ENCODE measurements at regions of chr2 and their contacts with region 1.

Region 1: GRCh38 chr2:96336104-96336775 is 674 bp downstream of the NCAPH start:
- DNase-seq: no peak
- H3K4me3 ChIP-seq: peak overlapping the region; percentile 75 to 90 (median 90)
- H3K27ac ChIP-seq: peak overlapping the region; percentile 50
- H3K4me1 ChIP-seq: peaks cover 15% of the 10 kb centered on the region
- H3K27me3 ChIP-seq: no peaks in the 10 kb centered on the region
- CTCF ChIP-seq: no peak
- POLR2A ChIP-seq: peak; percentile 63

Region 2: DNA sequence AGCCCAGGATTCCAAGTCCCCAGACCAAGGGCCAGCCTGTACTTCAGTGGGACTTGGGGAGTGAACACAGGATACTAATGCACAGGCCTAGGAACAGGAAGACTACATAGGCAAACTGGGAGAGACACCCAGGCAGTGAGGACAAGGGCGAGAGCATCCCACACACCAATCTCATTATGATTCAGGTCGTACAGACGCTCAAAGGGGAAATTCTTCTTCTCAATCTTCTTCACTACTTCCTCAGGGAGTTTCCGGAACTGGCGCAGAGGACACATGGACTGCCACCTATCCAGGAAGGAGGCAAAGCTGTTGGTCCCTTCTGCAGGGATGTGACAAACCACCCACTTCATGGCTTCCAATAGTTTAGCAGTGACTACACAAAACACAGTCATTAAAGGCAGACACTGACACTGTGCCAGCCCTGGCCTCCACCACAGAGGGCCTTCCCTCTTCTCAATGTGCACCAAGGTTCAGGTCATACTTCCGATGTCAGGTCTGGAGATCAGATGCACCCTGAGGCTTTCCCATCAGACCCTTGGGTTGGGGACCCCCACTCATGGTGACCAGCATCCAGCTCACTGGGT is 48.9 kb before region 1 on chr2:
- CTCF ChIA-PET with region 1: no interaction called
- POLR2A ChIA-PET with region 1: no interaction called
- dilution Hi-C with region 1: no loop called
- intact Hi-C with region 1: no loop called
- DNase-seq: no peak
- H3K4me3 ChIP-seq: no peak overlapping the region
- H3K27ac ChIP-seq: no peak overlapping the region
- H3K4me1 ChIP-seq: no peaks in the 10 kb centered on the region
- H3K27me3 ChIP-seq: no peaks in the 10 kb centered on the region
- CTCF ChIP-seq: no peak
- POLR2A ChIP-seq: no peak

Region 3: DNA sequence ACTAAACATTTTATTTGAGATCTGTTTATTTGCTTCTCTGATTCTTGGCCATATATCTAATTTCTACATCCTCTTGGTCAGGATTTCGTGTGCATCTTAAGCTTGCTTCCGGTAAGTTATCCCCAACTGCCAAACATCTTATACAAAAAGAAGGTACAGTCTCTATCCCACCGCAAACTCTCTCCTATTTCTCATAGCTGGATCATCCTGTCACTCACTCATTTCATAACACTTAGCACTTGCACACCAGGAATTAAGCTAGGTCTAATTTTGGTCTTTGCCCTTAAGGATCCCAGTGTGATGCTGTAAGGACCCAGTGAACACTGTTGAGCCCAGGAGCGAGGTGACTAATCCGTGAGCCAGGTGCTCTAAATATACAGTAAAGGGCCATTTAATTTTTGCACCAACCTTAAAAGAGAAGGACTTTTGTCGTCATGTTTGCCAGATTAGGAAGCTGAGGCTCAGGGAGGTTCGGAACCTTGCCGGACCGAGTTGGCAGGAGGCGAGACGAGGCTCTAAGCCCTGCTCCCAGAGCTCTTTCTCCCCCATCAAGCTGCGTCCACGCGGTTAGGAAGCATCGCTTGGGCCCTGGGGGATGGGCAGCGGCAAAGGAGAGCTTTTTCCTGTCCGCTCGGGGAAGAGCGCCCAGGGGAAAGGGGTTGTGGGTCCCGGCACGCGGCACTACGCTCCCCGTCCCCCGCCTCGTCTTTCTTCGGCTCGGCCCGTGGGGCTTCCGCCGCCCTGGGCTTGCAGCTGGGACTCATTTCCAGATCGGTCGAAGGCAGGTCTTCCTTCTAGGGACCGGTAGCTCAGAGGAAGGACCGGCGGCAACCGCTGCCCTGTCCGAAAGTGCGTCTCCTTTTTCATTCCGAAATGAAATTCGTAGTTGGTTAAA is 15.3 kb before region 1 on chr2:
- CTCF ChIA-PET with region 1: interaction called, 8 read pairs
- POLR2A ChIA-PET with region 1: interaction called, 10 read pairs
- dilution Hi-C with region 1: no loop called
- intact Hi-C with region 1: no loop called
- DNase-seq: peak; percentile 52
- H3K4me3 ChIP-seq: peak overlapping the region; percentile 63 to 83 (median 79)
- H3K27ac ChIP-seq: no peak overlapping the region
- H3K4me1 ChIP-seq: peaks cover 28% of the 10 kb centered on the region
- H3K27me3 ChIP-seq: peaks cover 10 to 15% of the 10 kb centered on the region in 2 experiments
- CTCF ChIP-seq: no peak
- POLR2A ChIP-seq: no peak

Measured in endothelial cell of umbilical vein (primary cell).